IMR-90 (cell line): ENCODE measurements at regions of chr9 and their contacts with region 1.

Region 1: DNA sequence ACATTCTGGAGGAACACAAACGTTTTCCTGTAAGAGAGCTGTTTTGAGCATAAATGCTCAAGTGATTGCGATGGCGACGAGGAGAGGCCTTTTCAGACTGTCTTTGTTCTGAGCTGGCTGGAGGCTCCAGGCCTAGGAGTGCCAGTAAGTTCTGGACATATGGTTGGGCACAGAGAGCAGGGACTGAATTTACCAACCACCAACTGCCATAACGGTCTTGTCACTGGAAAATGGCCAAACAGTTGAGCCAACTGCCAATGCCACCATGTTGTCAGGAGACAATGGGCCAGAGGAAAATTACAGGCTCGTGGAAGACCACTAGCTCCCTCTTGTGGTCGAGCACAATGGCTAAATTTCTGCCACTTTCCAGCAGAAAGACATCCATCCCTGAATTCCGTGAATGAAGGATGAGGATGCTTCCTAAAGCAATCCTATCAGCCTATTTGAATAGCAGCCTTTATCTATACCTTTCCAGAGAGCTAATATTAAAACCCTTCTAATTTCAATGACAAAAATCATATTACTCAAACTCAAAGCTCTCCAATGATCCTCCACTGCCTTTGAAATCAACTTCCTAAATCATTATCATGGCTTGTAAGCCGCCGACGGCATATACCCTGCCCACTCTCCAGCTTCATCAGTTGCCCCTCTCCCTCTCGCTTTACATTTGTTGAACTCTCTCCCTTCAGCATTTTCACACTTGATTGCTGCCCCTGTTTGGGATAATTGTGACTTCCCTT is 66.9 kb upstream of the GLIS3 start:
- DNase-seq: peak; percentile 54
- ATAC-seq: no peak
- H3K4me3 ChIP-seq: no peak overlapping the region
- H3K27ac ChIP-seq: no peak overlapping the region
- H3K4me1 ChIP-seq: no peaks in the 10 kb centered on the region
- H3K27me3 ChIP-seq: peaks cover 2% of the 10 kb centered on the region
- CTCF ChIP-seq: peak; percentile 80
- POLR2A ChIP-seq: no peak
- RAD21 ChIP-seq: peak; percentile 93

Region 2: DNA sequence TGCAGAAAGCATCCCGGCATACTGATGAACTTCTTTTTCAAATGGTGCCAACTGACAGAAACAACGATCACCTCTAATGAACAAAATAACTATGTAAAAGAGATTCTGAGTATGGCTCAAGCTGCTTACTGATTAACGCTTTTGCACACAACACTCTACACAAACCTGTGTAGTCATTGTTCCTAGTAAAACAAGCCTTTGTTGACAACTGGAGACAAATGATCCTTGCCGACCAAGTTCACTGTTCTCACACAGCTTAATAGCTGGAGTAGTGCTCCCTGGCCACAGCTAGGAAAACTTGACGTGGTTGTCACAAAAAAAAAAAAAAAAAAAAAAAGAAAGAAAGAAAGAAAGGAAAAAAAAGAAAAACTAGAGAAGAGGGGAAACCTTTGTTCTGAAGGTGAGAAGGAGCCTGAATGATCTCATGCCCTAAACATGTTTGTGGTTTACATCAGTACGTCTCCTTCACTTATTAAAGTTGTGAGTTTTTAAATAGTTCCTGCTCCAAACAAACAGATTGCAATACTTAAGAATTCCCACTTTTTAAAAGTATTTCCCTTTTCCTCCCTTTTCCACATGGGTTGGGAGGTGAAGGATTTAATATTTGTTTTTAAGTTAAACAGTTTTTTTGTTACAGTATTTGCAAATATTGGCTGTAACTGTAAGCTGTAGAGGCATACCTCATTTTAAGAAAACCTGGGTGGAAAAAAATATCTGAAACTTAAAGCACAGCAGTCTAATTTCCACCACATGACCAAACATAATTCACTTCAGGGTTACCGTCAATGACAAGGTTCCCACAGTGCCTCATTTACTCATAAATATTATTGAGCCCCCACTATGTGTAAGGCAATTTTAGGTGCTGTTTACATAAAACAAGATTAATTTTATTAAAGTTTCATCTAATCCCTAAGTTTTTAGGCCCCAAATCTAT is 130.6 kb before region 1 on chr9:
- CTCF ChIA-PET with region 1: no interaction called
- POLR2A ChIA-PET with region 1: no interaction called
- dilution Hi-C with region 1: no loop called
- in situ Hi-C with region 1: no loop called
- intact Hi-C with region 1: loop called (anchors 5 kb)
- DNase-seq: peak; percentile 62
- ATAC-seq: peak; percentile 28
- H3K4me3 ChIP-seq: no peak overlapping the region
- H3K27ac ChIP-seq: no peak overlapping the region
- H3K4me1 ChIP-seq: peaks cover 10% of the 10 kb centered on the region
- H3K27me3 ChIP-seq: no peaks in the 10 kb centered on the region
- CTCF ChIP-seq: no peak
- POLR2A ChIP-seq: no peak
- RAD21 ChIP-seq: no peak